ENCODE measurements at regions of chr6 and their contacts with region 1.

Region 1: DNA sequence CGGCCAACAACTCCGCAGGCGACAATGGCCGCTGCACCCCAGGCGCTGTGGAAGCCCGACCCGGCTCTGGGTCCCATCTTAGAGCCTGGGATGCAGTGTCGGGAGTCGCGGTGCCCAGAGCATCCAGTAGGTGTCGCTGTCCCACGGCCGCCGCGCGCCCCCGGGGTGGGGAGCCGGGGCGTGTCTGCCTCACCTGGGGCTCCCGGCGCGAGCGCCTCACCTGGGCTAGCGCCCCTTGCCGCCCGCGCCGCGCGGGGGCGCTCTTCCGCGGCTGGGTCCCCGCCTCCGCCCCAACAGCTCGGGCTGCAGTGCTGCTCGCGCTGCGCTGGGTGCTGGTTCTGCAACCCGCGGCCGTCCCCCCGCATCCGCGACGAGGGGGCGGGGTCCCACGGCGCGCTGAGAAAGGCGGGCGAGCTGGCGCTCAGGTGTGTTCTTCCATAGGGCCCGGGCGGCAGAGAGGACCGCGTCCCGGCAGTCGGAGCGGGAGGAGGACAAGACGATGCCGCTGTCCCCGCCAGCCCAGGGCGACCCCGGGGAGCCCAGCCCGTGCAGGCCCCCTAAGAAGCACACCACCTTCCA is at the start of gene CRYBG1:
- DNase-seq: peak; percentile 85
- CTCF ChIP-seq: peak; percentile 74

Region 2: DNA sequence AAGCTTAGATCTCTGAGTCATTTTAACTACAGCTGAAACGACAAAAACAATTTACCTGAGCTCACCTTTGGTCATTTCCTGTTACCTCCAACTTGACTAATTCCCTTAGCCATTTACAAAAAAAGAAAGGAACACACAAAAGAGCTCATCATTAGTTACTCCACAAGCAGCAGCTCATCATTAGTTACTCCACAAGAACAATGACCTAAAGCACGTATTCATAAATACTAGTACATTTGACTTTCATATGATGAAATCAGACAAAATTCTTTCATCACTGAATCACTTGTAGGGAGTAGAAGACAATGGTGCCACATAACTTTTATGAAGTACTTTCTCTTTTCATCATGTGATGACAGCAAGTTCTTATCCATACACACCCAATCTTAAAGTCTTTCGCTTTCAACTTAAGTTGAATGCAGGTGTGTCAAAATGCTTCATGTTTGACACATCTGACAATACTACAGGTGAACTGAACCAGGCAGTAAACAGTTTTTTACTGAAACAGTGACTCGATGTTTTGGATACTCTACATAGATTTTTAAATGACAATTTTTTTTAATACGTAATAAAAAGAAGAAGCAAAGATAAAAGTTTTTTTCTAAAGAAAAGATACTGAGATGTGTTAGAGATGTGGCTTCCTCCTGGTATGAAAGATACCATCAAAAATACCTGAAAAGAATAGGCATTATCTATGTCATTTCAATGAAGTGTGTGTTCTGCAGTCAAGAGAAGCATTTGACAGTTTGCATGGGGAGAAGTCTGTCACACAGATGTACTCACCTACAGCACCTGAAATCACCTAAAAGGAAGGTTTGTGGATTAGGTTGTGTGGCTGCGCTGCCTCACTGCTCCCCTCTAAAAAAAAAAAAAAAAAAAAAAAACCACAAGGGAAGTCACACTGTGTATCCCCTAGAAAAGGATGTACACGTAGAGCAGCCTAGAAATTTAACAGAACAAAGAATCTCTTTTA is 165.3 kb before region 1 on chr6:
- CTCF ChIA-PET with region 1: no interaction called
- POLR2A ChIA-PET with region 1: no interaction called
- DNase-seq: no peak
- CTCF ChIP-seq: no peak

Region 3: DNA sequence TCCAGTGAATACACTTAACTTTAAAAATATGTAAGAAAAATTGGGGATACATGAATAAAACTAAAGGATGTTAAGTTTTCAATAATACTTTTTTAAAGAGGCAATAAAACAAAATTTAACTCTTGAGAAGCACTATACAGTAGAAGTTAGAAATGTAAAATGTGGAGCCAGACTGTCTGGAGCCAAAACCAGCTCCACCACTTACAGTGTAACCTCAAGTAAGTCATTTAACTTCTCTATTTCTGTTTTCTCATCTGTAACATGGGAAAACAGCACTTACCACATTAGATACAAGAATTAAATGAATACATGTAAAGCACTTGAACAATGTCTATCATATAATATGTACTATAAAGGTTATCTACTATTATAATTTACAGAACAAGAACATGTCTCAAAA is 41.6 kb before region 1 on chr6:
- CTCF ChIA-PET with region 1: no interaction called
- POLR2A ChIA-PET with region 1: no interaction called
- DNase-seq: no peak
- CTCF ChIP-seq: no peak

Region 4: DNA sequence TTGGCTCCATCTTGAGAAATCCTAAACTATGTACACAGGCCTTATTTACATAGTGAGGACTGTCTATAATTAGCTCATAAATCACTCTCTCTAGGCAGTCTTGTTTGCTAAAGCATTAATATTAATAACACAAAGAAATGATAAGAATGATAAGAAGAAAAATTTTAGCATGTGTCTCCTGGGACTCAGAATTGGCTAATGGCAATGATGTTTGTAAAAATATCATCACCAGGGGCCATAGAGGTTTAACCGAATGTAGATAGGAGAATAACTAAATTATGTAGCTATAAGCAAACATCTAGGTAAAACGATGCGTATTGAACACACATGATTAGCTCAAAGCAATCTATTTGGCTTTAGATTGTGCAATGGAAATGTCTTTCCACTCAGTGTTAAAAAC is 13.2 kb before region 1 on chr6:
- CTCF ChIA-PET with region 1: interaction called, 25 read pairs
- POLR2A ChIA-PET with region 1: no interaction called
- DNase-seq: no peak
- CTCF ChIP-seq: no peak

Region 5: DNA sequence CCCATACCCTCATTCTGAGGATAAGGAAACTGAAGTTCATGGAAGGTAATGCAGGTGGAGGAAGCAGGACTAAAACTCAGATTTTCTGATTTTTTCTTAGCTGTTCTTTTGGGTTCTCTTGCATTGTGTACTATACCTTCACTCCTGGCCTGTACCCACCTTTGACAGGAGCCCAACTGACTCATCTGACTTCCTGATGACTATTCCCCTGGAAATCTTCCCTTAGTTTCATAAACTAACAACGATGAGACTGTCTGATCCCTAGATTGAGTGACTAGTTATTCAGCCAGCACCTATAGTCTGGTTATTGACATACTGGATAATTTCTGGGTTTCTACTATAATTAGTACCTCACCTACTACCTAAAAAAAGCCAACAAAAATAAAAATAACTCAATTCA is 10.1 kb after region 1 on chr6:
- CTCF ChIA-PET with region 1: interaction called, 30 read pairs
- POLR2A ChIA-PET with region 1: no interaction called
- DNase-seq: no peak
- CTCF ChIP-seq: no peak

Measured in GM10248 (cell line).